GM10248 (cell line): ENCODE measurements at regions of chr10 and their contacts with region 1.

Region 1: DNA sequence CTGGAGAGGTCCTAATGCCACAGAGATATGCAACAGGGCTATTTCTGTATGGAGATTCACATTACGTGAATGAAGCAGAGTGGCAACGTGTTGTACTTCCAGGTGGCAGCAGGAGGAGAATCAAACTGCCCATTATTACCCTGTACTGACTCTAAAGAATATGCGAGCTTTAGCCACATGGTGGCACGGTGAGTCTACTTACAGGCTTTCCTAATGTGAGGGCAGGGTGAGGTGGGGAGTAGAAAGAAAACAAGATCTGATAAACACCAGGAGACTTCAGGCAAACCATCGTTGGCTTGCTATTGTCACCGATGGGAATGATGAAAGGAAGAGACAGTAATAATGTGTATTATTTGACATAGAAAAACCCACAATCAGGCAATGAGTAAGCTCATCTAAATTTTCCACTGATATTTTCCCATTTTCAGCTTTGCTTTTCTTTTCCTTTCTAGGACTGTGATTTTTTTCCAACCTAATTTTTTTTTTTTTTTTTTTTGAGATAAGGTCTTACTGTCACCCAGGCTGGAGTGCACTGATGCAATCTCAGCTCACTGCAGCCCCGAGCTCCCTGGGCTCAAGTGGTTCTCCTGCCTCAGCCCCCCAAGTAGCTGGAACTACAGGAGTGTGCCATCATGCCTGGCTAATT is 164.3 kb downstream of the BTAF1 start:
- DNase-seq: peak; percentile 70
- CTCF ChIP-seq: peak; percentile 77

Region 2: DNA sequence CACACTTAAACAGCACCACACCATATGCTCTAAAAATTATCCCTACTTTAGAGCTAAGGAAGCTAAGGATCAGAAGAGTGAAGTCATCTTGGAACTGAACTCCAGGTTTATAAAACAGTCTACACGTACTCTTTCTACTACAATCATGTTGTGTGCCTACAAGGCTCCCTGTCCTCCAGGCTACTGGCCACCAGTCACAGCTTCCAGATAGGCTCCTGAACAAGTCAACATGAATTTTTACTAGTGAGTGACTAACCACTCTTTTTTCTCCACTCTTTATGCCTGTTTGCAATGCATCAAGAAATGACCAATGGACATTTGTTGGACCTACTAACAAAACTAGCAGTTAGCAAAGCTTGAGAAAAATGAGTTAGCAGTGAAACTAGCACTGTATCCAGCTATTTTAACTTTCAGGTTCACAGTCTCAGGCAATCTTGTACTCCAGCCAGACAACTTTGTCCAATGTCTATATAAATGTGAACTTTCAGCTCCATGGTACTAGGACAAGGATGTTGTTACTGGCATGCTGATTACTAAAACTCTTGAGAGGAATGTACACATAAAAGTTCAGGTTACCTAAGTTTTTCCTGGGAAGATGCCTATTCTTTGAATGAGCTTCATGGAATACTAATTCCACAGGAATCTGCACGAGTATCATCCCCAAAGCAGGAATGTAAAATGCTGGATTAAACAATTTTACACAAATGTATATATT is 15.7 kb after region 1 on chr10:
- CTCF ChIA-PET with region 1: interaction called, 33 read pairs
- POLR2A ChIA-PET with region 1: no interaction called
- DNase-seq: no peak
- CTCF ChIP-seq: no peak

Region 3: GRCh38 chr10:92200564-92200963 is 112.7 kb after region 1 on chr10:
- CTCF ChIA-PET with region 1: no interaction called
- POLR2A ChIA-PET with region 1: no interaction called
- DNase-seq: no peak
- CTCF ChIP-seq: no peak

Region 4: GRCh38 chr10:92434385-92434784 is 346.5 kb after region 1 on chr10:
- CTCF ChIA-PET with region 1: interaction called, 44 read pairs
- POLR2A ChIA-PET with region 1: no interaction called
- DNase-seq: no peak
- CTCF ChIP-seq: no peak